ENCODE measurements at regions of chr13 and their contacts with region 1.

Region 1: DNA sequence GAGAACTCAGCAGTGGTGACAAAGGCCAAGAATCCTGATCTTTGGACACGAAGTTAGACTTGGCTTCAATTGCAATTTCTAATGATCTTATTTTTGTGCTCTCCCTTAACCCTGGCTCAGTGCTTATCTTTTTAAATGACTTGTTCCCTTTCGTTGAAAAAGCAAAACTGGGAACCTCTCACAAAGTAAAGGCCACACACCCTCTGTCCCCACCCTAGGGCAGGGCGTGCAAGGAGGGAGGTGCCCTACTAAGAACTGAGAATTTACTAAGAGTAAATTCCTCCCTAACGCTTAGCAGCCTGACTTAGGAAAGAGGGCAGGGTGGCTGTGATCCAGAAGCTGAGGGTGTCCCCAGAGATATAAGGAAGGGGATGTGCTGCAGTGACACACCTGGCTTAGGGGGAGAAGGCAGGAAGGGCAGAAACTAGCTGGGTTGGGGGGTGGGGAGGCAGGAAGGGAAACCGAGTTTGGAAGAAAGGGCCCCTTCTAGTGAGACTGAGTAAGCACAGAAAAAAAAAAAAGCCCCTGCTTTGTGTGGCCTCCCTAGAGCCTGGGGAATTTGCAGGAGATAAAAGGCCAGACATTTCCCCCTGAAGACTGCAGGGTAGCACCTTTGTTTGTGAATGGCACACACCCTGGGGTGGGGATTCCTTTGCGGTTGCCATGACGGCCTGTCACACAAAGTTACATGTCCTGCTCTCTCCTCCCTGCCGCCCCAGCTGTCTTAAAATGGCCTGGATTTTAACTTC is 435.1 kb downstream of the EFNB2 start:
- DNase-seq: peak; percentile 95 to 98
- H3K4me3 ChIP-seq: peak overlapping the region; percentile 11; the same call in 1 of the 2 replicates
- H3K4me3 Mint-ChIP-seq: peak overlapping the region; percentile 68
- H3K27ac Mint-ChIP-seq: peak overlapping the region; percentile 92
- H3K4me1 ChIP-seq: peaks cover 95% of the 10 kb centered on the region
- H3K4me1 Mint-ChIP-seq: peaks cover 67% of the 10 kb centered on the region
- H3K27me3 ChIP-seq: no peaks in the 10 kb centered on the region
- H3K27me3 Mint-ChIP-seq: no peaks in the 10 kb centered on the region
- CTCF ChIP-seq: no peak

Region 2: GRCh38 chr13:105773863-105774538 is 326.3 kb before region 1 on chr13:
- CTCF ChIA-PET with region 1: no interaction called
- POLR2A ChIA-PET with region 1: no interaction called
- intact Hi-C with region 1: loop called (anchors 1 kb)
- DNase-seq: peak; percentile 8 to 38
- H3K4me3 ChIP-seq: no peak overlapping the region
- H3K4me3 Mint-ChIP-seq: peak overlapping the region; percentile 44
- H3K27ac Mint-ChIP-seq: peak overlapping the region; percentile 39
- H3K4me1 ChIP-seq: peaks cover 38% of the 10 kb centered on the region
- H3K4me1 Mint-ChIP-seq: peaks cover 33% of the 10 kb centered on the region
- H3K27me3 ChIP-seq: no peaks in the 10 kb centered on the region
- H3K27me3 Mint-ChIP-seq: no peaks in the 10 kb centered on the region
- CTCF ChIP-seq: no peak

Region 3: GRCh38 chr13:105979131-105980011 is 121.0 kb before region 1 on chr13:
- CTCF ChIA-PET with region 1: no interaction called
- POLR2A ChIA-PET with region 1: interaction called, 3 read pairs
- intact Hi-C with region 1: loop called (anchors 1 kb)
- DNase-seq: peak; percentile 87 to 95
- H3K4me3 ChIP-seq: peak overlapping the region; percentile 9
- H3K4me3 Mint-ChIP-seq: peak overlapping the region; percentile 57
- H3K27ac Mint-ChIP-seq: peak overlapping the region; percentile 82
- H3K4me1 ChIP-seq: peaks cover 40% of the 10 kb centered on the region
- H3K4me1 Mint-ChIP-seq: peaks cover 38% of the 10 kb centered on the region
- H3K27me3 ChIP-seq: no peaks in the 10 kb centered on the region
- H3K27me3 Mint-ChIP-seq: no peaks in the 10 kb centered on the region
- CTCF ChIP-seq: no peak

Region 4: GRCh38 chr13:106028911-106029310 is 71.4 kb before region 1 on chr13:
- CTCF ChIA-PET with region 1: no interaction called
- POLR2A ChIA-PET with region 1: no interaction called
- intact Hi-C with region 1: no loop called
- DNase-seq: no peak
- H3K4me3 ChIP-seq: no peak overlapping the region
- H3K4me3 Mint-ChIP-seq: no peak overlapping the region
- H3K27ac Mint-ChIP-seq: no peak overlapping the region
- H3K4me1 ChIP-seq: no peaks in the 10 kb centered on the region
- H3K4me1 Mint-ChIP-seq: peaks cover 7% of the 10 kb centered on the region
- H3K27me3 ChIP-seq: no peaks in the 10 kb centered on the region
- H3K27me3 Mint-ChIP-seq: no peaks in the 10 kb centered on the region
- CTCF ChIP-seq: no peak

Region 5: GRCh38 chr13:106129273-106129672 is 28.9 kb after region 1 on chr13:
- CTCF ChIA-PET with region 1: no interaction called
- POLR2A ChIA-PET with region 1: interaction called, 4 read pairs
- intact Hi-C with region 1: loop called (anchors 1 kb)
- DNase-seq: peak in 1 of 2 experiments; percentile 57
- H3K4me3 ChIP-seq: no peak overlapping the region
- H3K4me3 Mint-ChIP-seq: peak overlapping the region; percentile 9
- H3K27ac Mint-ChIP-seq: peak overlapping the region; percentile 68
- H3K4me1 ChIP-seq: peaks cover 41% of the 10 kb centered on the region
- H3K4me1 Mint-ChIP-seq: peaks cover 32% of the 10 kb centered on the region
- H3K27me3 ChIP-seq: no peaks in the 10 kb centered on the region
- H3K27me3 Mint-ChIP-seq: no peaks in the 10 kb centered on the region
- CTCF ChIP-seq: no peak

Region 6: DNA sequence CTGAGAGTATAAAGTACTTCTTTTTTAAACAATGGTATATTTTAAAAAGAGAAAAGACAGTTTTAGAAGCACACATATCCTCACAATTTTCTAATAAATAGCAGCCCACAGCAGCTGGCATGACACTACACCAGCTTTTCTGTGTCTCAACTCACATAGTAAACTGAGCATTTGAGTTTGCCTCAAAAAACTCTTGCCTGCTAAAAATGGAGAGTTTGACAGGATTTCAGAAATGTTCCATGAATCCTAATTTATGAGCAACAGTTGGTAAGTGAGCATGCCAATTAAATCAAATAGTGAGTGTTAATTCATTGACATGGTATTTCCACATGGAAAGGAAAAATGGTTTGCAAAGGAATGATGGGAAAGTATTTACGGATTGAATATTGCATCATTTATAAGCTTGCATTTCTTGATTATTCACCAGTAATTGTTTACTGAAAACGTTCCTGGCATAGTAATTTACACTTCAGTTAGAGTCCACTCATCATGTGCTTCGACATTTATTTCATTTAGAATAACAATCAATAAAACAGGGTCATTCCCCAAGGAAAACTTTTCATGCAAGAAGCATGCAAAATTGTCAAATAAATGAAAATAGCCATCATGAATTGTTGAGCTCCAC is 112.2 kb after region 1 on chr13:
- CTCF ChIA-PET with region 1: no interaction called
- POLR2A ChIA-PET with region 1: interaction called, 3 read pairs
- intact Hi-C with region 1: loop called (anchors 5 kb)
- DNase-seq: no peak
- H3K4me3 ChIP-seq: peak overlapping the region; percentile 58
- H3K4me3 Mint-ChIP-seq: peak overlapping the region; percentile 78
- H3K27ac Mint-ChIP-seq: peak overlapping the region; percentile 90
- H3K4me1 ChIP-seq: peaks cover 13% of the 10 kb centered on the region; the same call in 1 of the 2 replicates
- H3K4me1 Mint-ChIP-seq: peaks cover 6% of the 10 kb centered on the region
- H3K27me3 ChIP-seq: no peaks in the 10 kb centered on the region
- H3K27me3 Mint-ChIP-seq: no peaks in the 10 kb centered on the region
- CTCF ChIP-seq: no peak

Region 7: DNA sequence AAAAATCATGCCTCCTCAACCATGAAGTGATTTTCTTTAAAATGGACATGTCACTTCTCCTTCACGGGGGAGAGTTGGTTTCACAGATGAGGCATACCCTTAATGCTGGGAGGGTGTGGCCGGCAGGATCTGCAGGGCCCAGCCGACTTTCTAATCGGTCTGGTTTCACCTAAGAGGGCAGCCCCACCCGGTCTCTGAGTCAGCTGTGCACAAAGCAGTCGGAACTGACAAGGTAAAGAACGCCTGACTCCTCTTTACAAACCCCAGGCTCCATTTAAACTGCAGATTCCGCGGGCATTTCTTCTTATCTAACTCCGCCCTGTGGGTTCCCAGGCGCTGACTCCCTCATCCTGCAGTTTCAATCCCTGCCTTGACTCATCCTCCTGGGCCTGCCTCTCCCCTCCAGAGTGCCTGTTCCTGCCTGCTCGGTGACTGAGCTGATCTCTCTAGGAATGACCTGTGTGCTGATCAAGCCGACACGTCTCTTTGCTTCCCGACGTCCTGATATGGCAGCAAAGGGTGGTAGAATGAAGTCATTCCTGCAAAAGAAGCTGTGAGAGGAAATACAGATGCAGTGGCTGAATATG is 371.7 kb after region 1 on chr13:
- CTCF ChIA-PET with region 1: no interaction called
- POLR2A ChIA-PET with region 1: no interaction called
- intact Hi-C with region 1: loop called (anchors 5 kb)
- DNase-seq: peak; percentile 81 to 93
- H3K4me3 ChIP-seq: peak overlapping the region; percentile 27
- H3K4me3 Mint-ChIP-seq: peak overlapping the region; percentile 71
- H3K27ac Mint-ChIP-seq: peak overlapping the region; percentile 84
- H3K4me1 ChIP-seq: peaks cover 69% of the 10 kb centered on the region
- H3K4me1 Mint-ChIP-seq: peaks cover 48% of the 10 kb centered on the region
- H3K27me3 ChIP-seq: no peaks in the 10 kb centered on the region
- H3K27me3 Mint-ChIP-seq: no peaks in the 10 kb centered on the region
- CTCF ChIP-seq: no peak

Region 8: GRCh38 chr13:107124129-107124718 is 1023.9 kb after region 1 on chr13:
- CTCF ChIA-PET with region 1: no interaction called
- POLR2A ChIA-PET with region 1: no interaction called
- intact Hi-C with region 1: loop called (anchors 5 kb)
- DNase-seq: peak in 1 of 2 experiments; percentile 62
- H3K4me3 ChIP-seq: no peak overlapping the region
- H3K4me3 Mint-ChIP-seq: no peak overlapping the region
- H3K27ac Mint-ChIP-seq: no peak overlapping the region
- H3K4me1 ChIP-seq: peaks cover 60% of the 10 kb centered on the region
- H3K4me1 Mint-ChIP-seq: peaks cover 31% of the 10 kb centered on the region
- H3K27me3 ChIP-seq: no peaks in the 10 kb centered on the region
- H3K27me3 Mint-ChIP-seq: no peaks in the 10 kb centered on the region
- CTCF ChIP-seq: peak; percentile 53 to 64

Measured in Caco-2 (cell line).